Transverse colon (tissue), 4 donors: ENCODE measurements at regions of chr18 and their contacts with region 1.

Region 1: GRCh38 chr18:38067821-38068220 is 502.2 kb upstream of the CELF4 start:
- DNase-seq: no peak
- H3K4me3 ChIP-seq: no peak overlapping the region
- H3K27ac ChIP-seq: no peak overlapping the region
- H3K4me1 ChIP-seq: no peaks in the 10 kb centered on the region
- H3K27me3 ChIP-seq: no peaks in the 10 kb centered on the region
- CTCF ChIP-seq: no peak
- EP300 ChIP-seq: no peak
- POLR2A ChIP-seq: no peak

Region 2: GRCh38 chr18:36917907-36918306 is 1149.9 kb before region 1 on chr18:
- in situ Hi-C with region 1: no loop called
- intact Hi-C with region 1: no loop called
- DNase-seq: no peak
- H3K4me3 ChIP-seq: no peak overlapping the region
- H3K27ac ChIP-seq: no peak overlapping the region
- H3K4me1 ChIP-seq: no peaks in the 10 kb centered on the region
- H3K27me3 ChIP-seq: no peaks in the 10 kb centered on the region
- CTCF ChIP-seq: no peak
- EP300 ChIP-seq: no peak
- POLR2A ChIP-seq: no peak

Region 3: DNA sequence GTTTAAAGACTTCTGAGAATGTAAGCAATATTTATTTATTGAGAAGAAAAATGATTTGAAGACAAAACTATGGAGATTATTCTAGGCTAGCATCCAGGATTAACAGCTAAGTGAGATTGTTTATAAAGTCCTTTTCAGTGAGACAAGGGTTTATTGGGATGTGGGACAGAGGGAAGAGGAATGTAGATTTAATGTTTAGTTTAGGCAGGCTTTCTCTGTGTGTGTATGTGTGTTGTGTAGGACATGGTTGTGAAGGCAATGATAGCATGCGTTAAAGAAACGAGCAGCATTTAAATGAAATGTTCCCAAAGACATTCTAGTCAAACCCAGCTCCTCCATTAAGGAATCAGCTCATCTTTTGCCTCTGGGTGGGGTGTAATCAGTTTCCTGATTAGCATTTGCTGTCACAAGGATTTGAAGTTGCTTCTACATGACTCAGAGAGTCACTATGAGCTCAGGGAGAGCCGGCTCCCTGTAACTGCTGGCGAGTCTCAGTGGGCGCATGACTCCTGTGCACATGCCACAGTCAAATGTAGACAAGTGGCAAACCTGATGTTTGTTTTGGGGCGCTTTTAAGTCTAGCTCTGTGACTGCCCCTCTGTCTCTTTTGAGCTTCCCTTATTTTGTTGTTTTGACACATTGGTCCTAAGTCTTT is 60.0 kb before region 1 on chr18:
- in situ Hi-C with region 1: loop called in 1 of 4 experiments (anchors 10 kb)
- intact Hi-C with region 1: no loop called
- DNase-seq: no peak
- H3K4me3 ChIP-seq: no peak overlapping the region
- H3K27ac ChIP-seq: no peak overlapping the region
- H3K4me1 ChIP-seq: no peaks in the 10 kb centered on the region
- H3K27me3 ChIP-seq: no peaks in the 10 kb centered on the region
- CTCF ChIP-seq: no peak
- EP300 ChIP-seq: no peak
- POLR2A ChIP-seq: no peak